CD4-positive, alpha-beta memory T cell (primary cell): ENCODE measurements at regions of chr6 and their contacts with region 1.

Region 1: DNA sequence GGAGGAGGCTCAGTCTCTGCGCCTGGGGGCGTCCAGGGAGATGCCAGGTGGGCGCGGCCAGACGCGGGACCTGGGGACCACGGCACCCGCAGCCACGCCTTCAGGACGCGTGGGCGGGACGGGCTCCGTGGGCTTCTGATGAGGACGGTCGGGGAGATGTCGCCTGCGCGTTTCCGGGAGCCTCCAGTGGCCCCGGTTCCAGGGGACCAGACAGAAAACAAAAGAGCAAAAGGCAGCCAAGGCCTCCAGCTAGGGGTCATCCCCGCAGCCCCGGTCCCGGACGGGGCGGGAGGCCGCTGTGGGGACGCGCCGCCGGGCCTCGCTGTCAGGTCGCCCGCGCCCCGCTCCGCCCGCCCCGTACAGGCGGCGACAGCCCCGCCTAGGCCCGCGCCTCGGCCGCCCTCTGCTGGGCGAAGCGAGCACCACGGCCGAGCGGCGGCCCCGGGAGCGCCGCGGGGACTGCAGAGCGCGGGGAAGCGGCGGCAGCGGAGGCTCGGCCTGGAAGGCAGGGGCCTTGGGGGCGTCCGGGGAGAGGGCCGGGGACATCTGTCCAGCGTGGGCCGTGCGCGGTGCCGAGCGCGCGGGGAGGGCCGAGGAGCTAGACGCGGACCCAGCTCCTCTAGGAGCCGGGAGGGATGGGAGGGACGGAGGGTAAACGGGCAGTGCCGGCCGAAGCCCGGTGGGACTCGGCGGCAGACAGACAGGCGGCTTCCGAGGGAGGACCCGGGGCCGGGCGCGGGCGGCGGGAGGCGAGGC is 48.7 kb downstream of the TMEM242 start:
- DNase-seq: peak; percentile 85 to 92 (median 90)
- H3K4me3 ChIP-seq: peak overlapping the region; percentile 36 to 86
- H3K4me3 Mint-ChIP-seq: peak overlapping the region; percentile 89 to 96 (median 93)
- H3K27ac ChIP-seq: peak overlapping the region; percentile 69
- H3K27ac Mint-ChIP-seq: peak overlapping the region; percentile 95 to 98 (median 96)
- H3K4me1 ChIP-seq: peaks cover 11% of the 10 kb centered on the region
- H3K4me1 Mint-ChIP-seq: peaks cover 2 to 16% (median 8%) of the 10 kb centered on the region in 4 donors
- H3K27me3 ChIP-seq: no peaks in the 10 kb centered on the region
- H3K27me3 Mint-ChIP-seq: no peaks in the 10 kb centered on the region

Region 2: DNA sequence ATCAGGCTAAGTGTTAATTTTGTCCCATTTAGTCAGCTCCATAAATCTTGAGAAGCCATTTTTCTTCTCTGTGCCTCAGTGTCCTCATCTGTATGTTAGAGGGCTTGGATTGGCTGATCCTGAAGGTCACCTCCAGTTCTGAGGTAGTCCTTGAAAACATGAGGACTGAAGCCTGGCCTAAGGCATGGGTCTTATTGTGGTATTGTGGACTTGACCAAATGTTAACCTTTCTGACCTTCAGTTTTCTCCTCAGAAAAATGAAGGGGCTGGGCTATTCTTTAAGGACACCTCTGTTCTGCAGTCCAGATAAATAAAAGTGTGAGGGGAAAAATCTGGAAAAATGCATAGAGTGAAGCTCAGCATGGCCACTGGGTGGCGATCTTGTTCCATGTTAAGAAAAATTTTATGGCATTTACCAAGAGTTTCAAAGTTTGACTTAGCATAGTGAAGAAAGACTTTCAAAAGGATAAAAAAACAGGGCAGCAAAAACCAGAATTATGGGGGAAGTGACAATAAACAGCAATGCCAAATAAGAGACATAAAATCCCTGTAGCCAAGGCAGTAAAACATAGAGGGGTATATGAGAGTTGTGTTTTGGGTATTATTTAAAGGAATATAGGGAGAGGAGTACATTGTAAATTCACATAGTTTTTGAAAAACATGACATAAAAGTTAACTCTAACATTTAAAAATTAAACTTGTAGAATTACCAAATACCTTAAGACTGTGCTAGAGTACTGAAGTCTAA is 1947.1 kb before region 1 on chr6:
- CTCF ChIA-PET with region 1: interaction called, 6 read pairs
- POLR2A ChIA-PET with region 1: no interaction called
- intact Hi-C with region 1: loop called (anchors 1 kb)
- DNase-seq: peak; percentile 47 to 65 (median 62)
- H3K4me3 ChIP-seq: no peak overlapping the region
- H3K4me3 Mint-ChIP-seq: no peak overlapping the region
- H3K27ac ChIP-seq: no peak overlapping the region
- H3K27ac Mint-ChIP-seq: peak overlapping the region in 2 of 7 donors; percentile 0 to 64
- H3K4me1 ChIP-seq: no peaks in the 10 kb centered on the region
- H3K4me1 Mint-ChIP-seq: peaks cover 0 to 5% (median 3%) of the 10 kb centered on the region in 4 donors
- H3K27me3 ChIP-seq: no peaks in the 10 kb centered on the region
- H3K27me3 Mint-ChIP-seq: peaks cover 0 to 1% of the 10 kb centered on the region in 2 donors

Region 3: DNA sequence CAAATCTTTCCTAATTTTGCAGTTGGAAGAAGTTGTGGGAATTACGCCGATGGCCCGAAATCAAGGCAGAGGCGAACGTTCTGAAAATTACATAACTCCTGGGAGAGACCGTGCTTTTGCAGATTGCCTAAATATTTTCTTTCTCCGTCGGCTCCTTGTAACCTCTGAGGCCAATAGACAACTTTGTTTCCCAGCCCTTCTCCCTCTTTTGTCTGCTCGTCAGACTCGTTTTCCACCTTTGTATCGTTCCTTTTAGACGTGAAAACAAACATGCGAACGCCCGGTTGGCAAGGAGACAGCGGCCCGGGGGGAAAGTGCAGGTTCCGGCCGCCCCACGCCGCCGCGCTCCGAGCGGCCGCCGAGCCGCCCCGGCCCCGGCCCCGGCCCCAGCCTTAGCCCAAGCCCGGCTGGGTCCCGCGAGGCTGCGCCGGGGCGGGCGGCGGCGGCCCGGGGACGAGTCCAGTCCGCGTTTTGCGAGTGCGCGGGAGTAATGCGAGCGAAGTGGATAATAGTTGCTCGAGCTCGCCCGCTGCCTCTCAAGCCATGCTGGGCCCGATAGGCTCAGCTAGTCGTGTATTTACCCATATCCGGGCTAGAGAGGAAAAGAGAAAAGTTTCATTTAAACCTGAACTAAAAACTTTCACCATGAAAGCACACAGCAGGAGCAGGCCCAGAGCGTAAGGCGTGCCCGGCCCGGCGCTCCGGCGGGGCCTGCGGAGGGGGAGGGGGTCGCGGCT is 497.6 kb before region 1 on chr6 and contains the start of gene ARID1B:
- CTCF ChIA-PET with region 1: no interaction called
- POLR2A ChIA-PET with region 1: interaction called, 14 read pairs
- intact Hi-C with region 1: loop called (anchors 1 kb)
- DNase-seq: peak; percentile 84 to 87 (median 86)
- H3K4me3 ChIP-seq: peak within 1 kb of the TSS; percentile 54 to 72
- H3K4me3 Mint-ChIP-seq: peak within 1 kb of the TSS; percentile 92 to 99 (median 96)
- H3K27ac ChIP-seq: peak within 1 kb of the TSS; percentile 84
- H3K27ac Mint-ChIP-seq: peak within 1 kb of the TSS; percentile 97 to 99 (median 99)
- H3K4me1 ChIP-seq: peaks cover 21% of the 10 kb centered on the region
- H3K4me1 Mint-ChIP-seq: peaks cover 19 to 44% (median 30%) of the 10 kb centered on the region in 4 donors
- H3K27me3 ChIP-seq: no peaks in the 10 kb centered on the region
- H3K27me3 Mint-ChIP-seq: no peaks in the 10 kb centered on the region
- total RNA-seq, gene ARID1B: 118 to 131 TPM

Region 4: GRCh38 chr6:156832231-156832647 is 442.4 kb before region 1 on chr6:
- CTCF ChIA-PET with region 1: no interaction called
- POLR2A ChIA-PET with region 1: no interaction called
- intact Hi-C with region 1: no loop called
- DNase-seq: no peak
- H3K4me3 ChIP-seq: no peak overlapping the region
- H3K4me3 Mint-ChIP-seq: peak overlapping the region in 1 of 8 donors; percentile 6
- H3K27ac ChIP-seq: no peak overlapping the region
- H3K27ac Mint-ChIP-seq: peak overlapping the region in 1 of 7 donors; percentile 10
- H3K4me1 ChIP-seq: peaks cover 21% of the 10 kb centered on the region
- H3K4me1 Mint-ChIP-seq: peaks cover 35 to 60% (median 48%) of the 10 kb centered on the region in 4 donors
- H3K27me3 ChIP-seq: no peaks in the 10 kb centered on the region
- H3K27me3 Mint-ChIP-seq: no peaks in the 10 kb centered on the region

Region 5: DNA sequence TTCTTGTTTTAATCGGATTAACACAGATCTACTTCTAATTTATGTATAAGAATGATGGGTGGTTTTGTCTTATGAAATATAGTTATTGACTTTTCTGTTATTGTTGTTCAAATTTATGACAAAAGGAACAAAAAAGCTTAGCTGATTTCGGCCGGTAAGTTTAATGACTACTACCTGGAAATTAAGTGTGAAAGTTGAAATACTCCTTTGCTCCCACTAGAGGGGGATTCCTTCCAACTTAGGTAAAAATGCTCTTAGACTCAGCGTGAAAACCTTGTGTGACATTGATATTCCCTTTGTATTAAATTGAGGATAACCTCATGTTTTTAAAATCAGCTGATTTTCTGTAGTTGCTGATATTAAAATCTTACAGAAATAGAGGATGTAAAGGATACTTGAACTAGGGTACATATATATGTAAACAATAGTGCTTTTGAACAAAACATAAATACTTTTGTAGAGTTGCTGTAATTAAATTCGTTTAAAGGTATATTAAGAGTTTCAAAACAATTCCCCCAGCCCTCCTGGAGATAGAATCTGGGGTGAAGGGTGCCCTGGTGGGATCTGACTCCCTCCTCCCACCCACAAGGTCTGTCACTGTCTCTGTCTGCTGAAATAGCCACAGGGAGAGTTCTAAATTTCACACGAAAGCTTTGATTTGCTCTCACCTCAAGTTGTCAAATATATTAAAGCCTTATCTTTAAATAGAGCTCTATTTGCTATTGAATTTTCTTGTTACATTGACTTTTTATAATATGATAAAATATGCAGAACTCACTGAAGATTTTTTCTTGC is 240.0 kb before region 1 on chr6:
- CTCF ChIA-PET with region 1: interaction called, 7 read pairs
- POLR2A ChIA-PET with region 1: interaction called, 5 read pairs
- intact Hi-C with region 1: loop called (anchors 1 kb)
- DNase-seq: peak in 4 of 5 donors; percentile 32 to 50 (median 42)
- H3K4me3 ChIP-seq: no peak overlapping the region
- H3K4me3 Mint-ChIP-seq: peak overlapping the region; percentile 64 to 99 (median 73)
- H3K27ac ChIP-seq: no peak overlapping the region
- H3K27ac Mint-ChIP-seq: peak overlapping the region in 6 of 7 donors; percentile 19 to 98 (median 76)
- H3K4me1 ChIP-seq: peaks cover 26% of the 10 kb centered on the region
- H3K4me1 Mint-ChIP-seq: peaks cover 14 to 28% (median 25%) of the 10 kb centered on the region in 4 donors
- H3K27me3 ChIP-seq: no peaks in the 10 kb centered on the region
- H3K27me3 Mint-ChIP-seq: no peaks in the 10 kb centered on the region

Region 6: GRCh38 chr6:157221007-157221816 is 53.4 kb before region 1 on chr6:
- CTCF ChIA-PET with region 1: interaction called, 6 read pairs
- POLR2A ChIA-PET with region 1: interaction called, 12 read pairs
- intact Hi-C with region 1: loop called (anchors 1 kb)
- DNase-seq: peak; percentile 80 to 84 (median 83)
- H3K4me3 ChIP-seq: peak overlapping the region in 1 of 2 donors; percentile 66
- H3K4me3 Mint-ChIP-seq: peak overlapping the region; percentile 83 to 96 (median 89)
- H3K27ac ChIP-seq: no peak overlapping the region
- H3K27ac Mint-ChIP-seq: peak overlapping the region; percentile 66 to 96 (median 81)
- H3K4me1 ChIP-seq: peaks cover 45% of the 10 kb centered on the region
- H3K4me1 Mint-ChIP-seq: peaks cover 24 to 43% (median 34%) of the 10 kb centered on the region in 4 donors
- H3K27me3 ChIP-seq: no peaks in the 10 kb centered on the region
- H3K27me3 Mint-ChIP-seq: no peaks in the 10 kb centered on the region

Region 7: DNA sequence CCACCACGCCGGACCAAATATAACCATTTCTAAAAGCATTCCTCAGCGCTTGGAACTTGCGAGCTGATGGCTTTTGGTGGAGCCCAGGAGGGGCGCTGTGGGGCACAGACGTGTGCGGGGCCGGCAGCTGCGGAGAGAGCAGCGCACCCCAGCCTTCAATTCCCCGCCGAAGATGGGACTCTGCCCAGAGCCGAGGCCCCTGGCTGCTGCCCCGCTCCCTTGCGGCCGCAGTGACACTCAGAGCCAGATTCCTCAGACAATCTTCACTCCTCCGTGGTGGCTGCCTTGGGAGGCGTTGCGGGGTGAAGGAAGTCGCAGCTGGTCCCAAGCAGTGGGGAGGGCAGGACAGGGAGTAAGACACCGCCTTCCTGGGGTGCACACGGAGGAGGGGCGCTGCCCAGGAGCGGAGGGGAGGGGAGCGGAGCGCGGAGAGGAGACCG is 39.0 kb before region 1 on chr6:
- CTCF ChIA-PET with region 1: interaction called, 11 read pairs
- POLR2A ChIA-PET with region 1: interaction called, 48 read pairs
- intact Hi-C with region 1: loop called (anchors 1 kb)
- DNase-seq: peak; percentile 55 to 68 (median 62)
- H3K4me3 ChIP-seq: peak overlapping the region; percentile 47 to 70
- H3K4me3 Mint-ChIP-seq: peak overlapping the region; percentile 90 to 96 (median 92)
- H3K27ac ChIP-seq: no peak overlapping the region
- H3K27ac Mint-ChIP-seq: peak overlapping the region in 6 of 7 donors; percentile 61 to 85 (median 79)
- H3K4me1 ChIP-seq: peaks cover 24% of the 10 kb centered on the region
- H3K4me1 Mint-ChIP-seq: peaks cover 17 to 38% (median 21%) of the 10 kb centered on the region in 4 donors
- H3K27me3 ChIP-seq: peaks cover 7% of the 10 kb centered on the region
- H3K27me3 Mint-ChIP-seq: peaks cover 5 to 8% of the 10 kb centered on the region in 2 donors

Region 8: DNA sequence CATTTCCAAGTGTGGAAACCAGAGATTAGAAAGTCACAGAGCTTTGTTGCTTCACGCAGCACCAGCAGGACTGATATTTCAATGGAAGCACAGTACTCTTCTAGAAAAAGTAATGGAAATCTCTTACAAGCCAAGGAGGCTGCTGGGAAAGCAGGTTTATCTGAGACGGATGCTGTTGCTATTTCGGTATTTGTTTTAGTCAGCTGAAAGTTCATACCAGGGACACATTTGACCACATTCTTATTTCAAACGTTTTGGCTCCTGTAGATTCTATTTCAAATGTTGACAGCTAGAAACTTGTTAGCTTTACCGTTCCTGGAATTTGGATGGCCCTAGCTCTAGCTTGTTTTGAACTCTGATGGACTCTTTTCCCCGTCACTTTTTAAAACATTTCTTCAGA is 52.3 kb after region 1 on chr6:
- CTCF ChIA-PET with region 1: no interaction called
- POLR2A ChIA-PET with region 1: no interaction called
- intact Hi-C with region 1: no loop called
- DNase-seq: no peak
- H3K4me3 ChIP-seq: no peak overlapping the region
- H3K4me3 Mint-ChIP-seq: no peak overlapping the region
- H3K27ac ChIP-seq: no peak overlapping the region
- H3K27ac Mint-ChIP-seq: no peak overlapping the region
- H3K4me1 ChIP-seq: peaks cover 15% of the 10 kb centered on the region
- H3K4me1 Mint-ChIP-seq: peaks cover 8 to 20% (median 12%) of the 10 kb centered on the region in 4 donors
- H3K27me3 ChIP-seq: no peaks in the 10 kb centered on the region
- H3K27me3 Mint-ChIP-seq: peaks cover 5 to 22% of the 10 kb centered on the region in 2 donors

Region 9: DNA sequence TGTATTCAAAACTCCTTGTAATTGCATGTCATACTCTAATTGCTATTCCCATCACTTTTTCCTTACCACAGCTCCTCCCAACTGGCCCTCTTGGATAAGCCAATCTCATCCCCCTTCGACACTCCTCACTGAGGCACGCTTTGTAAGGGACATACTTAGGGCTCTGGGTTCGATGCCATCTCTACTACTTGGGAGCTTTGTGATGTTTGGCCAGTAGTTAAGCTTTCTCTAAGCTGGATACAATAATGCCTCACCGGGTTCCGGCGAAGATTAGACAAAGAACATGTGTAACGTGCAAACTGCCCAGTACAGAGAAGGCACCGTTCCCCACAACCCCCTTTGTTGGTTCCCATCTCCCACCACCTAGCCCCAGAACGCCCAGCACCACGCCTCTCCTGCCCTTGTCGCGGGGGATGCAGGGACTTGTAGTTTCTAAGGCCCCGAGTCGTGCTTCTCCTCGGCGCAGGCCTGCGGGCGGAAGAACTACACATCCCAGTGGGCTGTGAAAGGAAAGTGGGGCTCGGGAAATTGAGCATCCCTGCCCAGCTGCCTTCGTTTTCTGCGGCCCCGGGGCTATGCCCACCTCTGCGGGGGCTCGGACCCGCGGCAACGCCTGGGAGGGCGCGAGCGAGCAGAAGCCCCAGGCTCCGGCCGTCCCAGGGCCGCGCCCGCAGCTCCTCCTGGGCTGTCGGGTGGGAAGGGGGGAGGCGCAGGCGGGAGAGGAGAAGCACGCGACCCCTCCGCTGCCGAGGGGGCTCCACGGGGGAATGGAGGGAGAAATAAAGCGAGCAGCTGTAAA is 105.2 kb after region 1 on chr6:
- CTCF ChIA-PET with region 1: no interaction called
- POLR2A ChIA-PET with region 1: interaction called, 11 read pairs
- intact Hi-C with region 1: loop called (anchors 1 kb)
- DNase-seq: peak; percentile 83 to 92 (median 85)
- H3K4me3 ChIP-seq: peak overlapping the region; percentile 76 to 83
- H3K4me3 Mint-ChIP-seq: peak overlapping the region; percentile 77 to 91 (median 86)
- H3K27ac ChIP-seq: peak overlapping the region; percentile 66
- H3K27ac Mint-ChIP-seq: peak overlapping the region; percentile 37 to 80 (median 66)
- H3K4me1 ChIP-seq: peaks cover 15% of the 10 kb centered on the region
- H3K4me1 Mint-ChIP-seq: peaks cover 11 to 17% (median 14%) of the 10 kb centered on the region in 4 donors
- H3K27me3 ChIP-seq: no peaks in the 10 kb centered on the region
- H3K27me3 Mint-ChIP-seq: peaks cover 0 to 3% of the 10 kb centered on the region in 2 donors